ENCODE measurements at regions of chr6 and their contacts with region 1.

Region 1: DNA sequence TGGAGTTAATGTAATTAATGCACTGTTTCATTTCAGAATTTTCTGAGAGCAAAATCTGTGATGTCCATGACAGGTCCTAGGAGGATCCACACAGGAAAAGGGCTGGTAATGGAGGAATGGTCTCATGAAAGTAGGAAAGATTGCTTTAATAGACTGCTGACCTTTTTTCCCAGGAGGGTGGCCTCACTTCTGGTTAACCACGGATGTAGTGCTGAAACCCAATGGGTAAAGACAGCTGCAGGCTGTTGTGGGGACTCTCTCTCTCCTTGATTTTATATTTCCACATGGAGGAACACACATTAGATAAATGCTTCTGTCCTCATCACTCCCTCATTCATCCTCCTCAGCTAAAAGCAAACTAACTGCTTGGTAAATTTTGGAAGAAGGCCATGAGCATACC is 23.6 kb upstream of the RIPOR2 start:
- DNase-seq: no peak
- H3K4me3 ChIP-seq: no peak overlapping the region
- H3K27ac ChIP-seq: no peak overlapping the region
- H3K4me1 ChIP-seq: no peaks in the 10 kb centered on the region
- H3K27me3 ChIP-seq: peaks cover 2% of the 10 kb centered on the region
- CTCF ChIP-seq: no peak

Region 2: DNA sequence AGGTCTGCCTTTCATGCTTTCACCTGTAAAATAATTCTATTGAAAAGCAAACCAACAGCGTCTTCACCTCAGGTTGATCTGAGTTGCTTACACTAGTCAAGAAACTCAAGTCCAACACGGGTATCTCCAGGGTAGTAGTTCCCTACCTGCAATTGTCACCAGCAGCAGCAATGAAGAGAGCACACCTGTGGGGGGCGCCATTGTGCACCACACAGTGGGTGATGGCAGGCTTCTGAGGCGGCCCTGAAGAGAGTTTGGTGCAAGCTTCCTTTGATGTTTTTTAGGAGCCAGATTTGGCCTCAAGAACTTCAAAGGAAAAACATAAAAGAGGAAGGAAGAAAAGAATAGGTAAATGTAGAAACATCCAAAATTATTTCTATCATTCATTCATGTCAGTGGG is 358.4 kb before region 1 on chr6:
- CTCF ChIA-PET with region 1: no interaction called
- dilution Hi-C with region 1: no loop called
- in situ Hi-C with region 1: no loop called
- intact Hi-C with region 1: no loop called
- DNase-seq: no peak
- H3K4me3 ChIP-seq: no peak overlapping the region
- H3K27ac ChIP-seq: no peak overlapping the region
- H3K4me1 ChIP-seq: no peaks in the 10 kb centered on the region
- H3K27me3 ChIP-seq: no peaks in the 10 kb centered on the region
- CTCF ChIP-seq: peak in 1 of 2 donors; percentile 13

Region 3: DNA sequence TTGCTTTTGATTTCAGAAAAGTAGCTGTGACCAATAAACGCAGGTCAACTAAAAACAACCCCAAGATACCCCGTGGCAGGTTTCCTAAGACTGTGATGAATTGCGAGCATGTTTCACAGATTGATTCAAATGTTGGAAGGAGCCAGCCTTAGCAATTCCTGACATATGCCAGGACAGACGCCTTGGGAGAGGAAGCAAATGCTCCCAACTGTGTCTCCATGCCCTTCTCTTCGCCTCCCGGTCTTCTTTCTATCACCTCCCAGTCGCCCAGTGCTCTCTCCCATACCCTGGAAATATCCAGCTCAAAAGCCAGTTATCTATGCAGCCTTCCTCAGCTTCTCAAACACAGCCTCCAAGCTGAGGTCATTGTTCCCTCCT is 345.3 kb before region 1 on chr6:
- CTCF ChIA-PET with region 1: no interaction called
- dilution Hi-C with region 1: no loop called
- in situ Hi-C with region 1: no loop called
- intact Hi-C with region 1: loop called (anchors 5 kb)
- DNase-seq: no peak
- H3K4me3 ChIP-seq: no peak overlapping the region
- H3K27ac ChIP-seq: no peak overlapping the region
- H3K4me1 ChIP-seq: no peaks in the 10 kb centered on the region
- H3K27me3 ChIP-seq: peaks cover 4% of the 10 kb centered on the region
- CTCF ChIP-seq: no peak

Region 4: GRCh38 chr6:24838081-24838480 is 121.2 kb before region 1 on chr6:
- CTCF ChIA-PET with region 1: interaction called, 25 read pairs
- dilution Hi-C with region 1: no loop called
- in situ Hi-C with region 1: no loop called
- intact Hi-C with region 1: no loop called
- DNase-seq: no peak
- H3K4me3 ChIP-seq: no peak overlapping the region
- H3K27ac ChIP-seq: no peak overlapping the region
- H3K4me1 ChIP-seq: no peaks in the 10 kb centered on the region
- H3K27me3 ChIP-seq: peaks cover 1% of the 10 kb centered on the region
- CTCF ChIP-seq: no peak

Region 5: DNA sequence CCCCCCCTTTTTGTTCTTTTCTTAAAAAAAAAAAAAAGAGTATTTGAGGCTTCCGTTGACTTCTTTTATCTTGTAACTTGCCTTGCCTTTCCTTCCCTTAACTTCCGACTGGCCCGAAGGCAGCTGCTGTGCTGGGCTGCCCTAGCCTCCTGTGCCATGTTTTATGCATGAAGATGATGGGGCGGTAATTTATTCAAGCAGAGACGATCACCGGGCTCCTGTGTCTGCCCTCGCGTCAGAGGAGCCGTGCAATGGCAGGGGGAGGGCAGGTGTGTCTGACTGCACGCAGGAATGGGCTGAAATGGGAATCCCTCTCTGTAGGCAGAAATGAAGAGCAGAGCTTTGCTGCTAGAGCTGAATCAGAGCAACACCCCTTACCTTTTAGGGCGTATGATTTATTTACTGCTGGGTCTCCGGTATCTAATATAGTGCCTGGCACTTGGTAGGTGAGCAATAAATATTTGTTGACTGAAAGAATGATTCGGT is 82.8 kb after region 1 on chr6:
- CTCF ChIA-PET with region 1: no interaction called
- dilution Hi-C with region 1: no loop called
- in situ Hi-C with region 1: no loop called
- intact Hi-C with region 1: no loop called
- DNase-seq: no peak
- H3K4me3 ChIP-seq: no peak overlapping the region
- H3K27ac ChIP-seq: no peak overlapping the region
- H3K4me1 ChIP-seq: no peaks in the 10 kb centered on the region
- H3K27me3 ChIP-seq: no peaks in the 10 kb centered on the region
- CTCF ChIP-seq: no peak